ENCODE measurements at regions of chr12 and their contacts with region 1.

Region 1: GRCh38 chr12:78863482-78864402 is 832 bp upstream of the SYT1 start:
- DNase-seq: peak; percentile 61

Region 2: DNA sequence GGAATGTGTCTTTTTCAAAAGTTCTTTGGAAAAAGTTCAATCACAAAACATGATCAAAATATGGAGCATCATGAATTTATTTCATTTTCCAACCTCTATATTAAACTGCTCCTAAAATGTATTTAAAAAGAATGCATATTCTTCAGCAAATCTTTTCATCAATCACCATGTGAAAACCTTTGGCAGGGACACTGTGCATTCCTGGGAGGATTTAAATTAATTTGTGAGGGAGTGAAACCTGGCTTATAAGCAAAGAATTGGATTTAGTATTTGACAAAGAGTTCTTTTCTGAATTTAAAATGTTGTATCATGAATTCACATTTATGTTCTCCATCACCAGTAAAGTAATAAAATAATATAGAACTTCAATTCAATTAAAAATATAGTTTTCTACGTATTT is 788.8 kb after region 1 on chr12:
- CTCF ChIA-PET with region 1: interaction called, 10 read pairs
- POLR2A ChIA-PET with region 1: no interaction called
- DNase-seq: no peak

Measured in HEK293T (cell line).